A549 (cell line): ENCODE measurements at regions of chr10 and their contacts with region 1.

Region 1: DNA sequence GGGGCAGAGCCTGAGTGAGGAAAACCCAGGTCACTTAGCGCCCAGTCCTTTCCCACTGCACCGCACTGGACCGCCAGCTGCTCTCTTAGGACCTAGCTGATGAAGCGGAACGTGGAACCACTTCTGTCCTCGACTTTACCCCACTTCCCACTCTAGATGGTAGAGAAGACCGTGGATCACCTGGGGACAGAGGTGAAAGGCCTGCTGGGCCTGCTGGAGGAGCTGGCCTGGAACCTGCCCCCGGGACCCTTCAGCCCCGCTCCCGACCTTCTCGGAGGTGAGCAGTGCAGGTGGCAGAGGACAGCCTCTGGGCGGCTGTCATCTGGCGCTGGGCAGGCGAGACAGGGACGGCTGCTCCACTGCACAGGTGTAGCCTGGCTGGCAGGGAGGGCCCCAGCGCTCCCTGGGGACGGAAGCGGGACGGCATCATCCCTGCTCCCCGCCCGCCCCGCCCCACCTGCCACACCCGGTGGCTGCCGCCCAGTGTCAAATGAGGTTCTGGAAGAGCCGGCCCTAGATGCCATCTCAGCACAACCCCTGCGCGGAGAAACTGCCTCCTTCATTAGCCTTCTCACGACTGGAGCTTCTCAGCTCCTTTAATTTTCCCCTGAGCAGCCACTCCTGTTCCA is 11.7 kb downstream of the PLAC9 start:
- DNase-seq: peak in 1 of 2 experiments; percentile 37
- ATAC-seq: peak; percentile 70 to 78
- H3K4me3 ChIP-seq: peak overlapping the region; percentile 33
- H3K27ac ChIP-seq: peak overlapping the region in 1 of 2 experiments; percentile 67; a peak in 4 of 6 replicates
- H3K4me1 ChIP-seq: peaks cover 3% of the 10 kb centered on the region; the same call in 1 of the 3 replicates
- CTCF ChIP-seq: no peak
- EP300 ChIP-seq: no peak
- POLR2A ChIP-seq: no peak
- RAD21 ChIP-seq: peak in 1 of 2 experiments; percentile 33; a peak in 2 of 5 replicates

Region 2: DNA sequence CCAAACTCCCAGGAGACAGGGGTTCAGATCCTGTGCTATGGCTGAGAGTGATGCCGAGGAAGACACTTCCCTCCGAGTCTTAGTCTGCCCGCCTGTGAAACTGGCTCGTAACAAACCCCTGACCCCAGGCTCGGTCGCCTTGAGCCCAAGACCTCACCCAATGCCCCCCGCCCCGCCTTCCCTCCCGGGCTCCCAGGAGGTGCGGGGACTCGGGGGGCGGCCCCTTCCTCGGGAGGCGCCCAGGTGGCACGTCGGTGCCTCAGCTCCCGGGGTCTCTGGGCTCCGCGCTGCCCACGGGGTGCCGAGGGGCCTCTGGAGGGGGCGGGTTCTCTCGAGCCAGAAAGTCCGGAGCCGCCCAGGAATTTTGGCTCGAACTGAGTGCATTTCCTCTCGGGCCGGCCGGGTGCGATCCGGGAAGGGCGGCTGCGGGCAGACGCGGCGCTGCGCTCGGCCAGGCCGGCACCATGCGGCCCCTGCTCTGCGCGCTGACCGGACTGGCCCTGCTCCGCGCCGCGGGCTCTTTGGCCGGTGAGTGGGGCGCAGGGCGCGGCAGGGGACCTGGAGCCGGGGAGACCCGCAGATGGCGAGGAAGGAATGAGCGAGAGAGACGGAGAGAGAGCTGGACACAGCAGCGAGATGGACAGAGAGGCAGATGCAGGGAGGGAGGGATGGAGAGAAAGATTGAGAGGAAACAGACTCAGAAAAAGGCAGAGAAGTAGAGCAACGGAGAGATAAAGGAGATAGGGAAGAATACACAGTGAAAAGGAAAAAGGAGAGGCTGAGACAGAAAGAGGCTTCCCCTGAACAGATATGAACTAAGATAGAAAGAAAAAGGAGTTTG is 11.7 kb before region 1 on chr10 and contains the start of gene PLAC9:
- CTCF ChIA-PET with region 1: interaction called, 27 read pairs
- POLR2A ChIA-PET with region 1: no interaction called
- DNase-seq: peak in 1 of 2 experiments; percentile 18
- ATAC-seq: peak; percentile 78 to 90
- H3K4me3 ChIP-seq: peak within 1 kb of the TSS; percentile 50
- H3K27ac ChIP-seq: peak within 1 kb of the TSS; percentile 12 to 67; a peak in 5 of 6 replicates
- H3K4me1 ChIP-seq: 0 out of 3 replicates have a peak, but pooled peaks cover 9% of the 10 kb centered on the region
- CTCF ChIP-seq: no peak
- EP300 ChIP-seq: no peak
- POLR2A ChIP-seq: no peak
- RAD21 ChIP-seq: no peak
- polyA plus RNA-seq, gene PLAC9: not detected in 2 replicates

Region 3: GRCh38 chr10:80168679-80169380 is 24.6 kb after region 1 on chr10:
- CTCF ChIA-PET with region 1: interaction called, 11 read pairs
- POLR2A ChIA-PET with region 1: no interaction called
- DNase-seq: peak in 1 of 2 experiments; percentile 51
- ATAC-seq: peak; percentile 49 to 80; a peak in 5 of 6 replicates
- H3K4me3 ChIP-seq: no peak overlapping the region
- H3K27ac ChIP-seq: no peak overlapping the region
- H3K4me1 ChIP-seq: peaks cover 15% of the 10 kb centered on the region
- CTCF ChIP-seq: peak; percentile 47
- EP300 ChIP-seq: no peak
- POLR2A ChIP-seq: no peak
- RAD21 ChIP-seq: peak; percentile 44 to 52; a peak in 4 of 5 replicates

Region 4: GRCh38 chr10:80205478-80206276 is 61.5 kb after region 1 on chr10 and contains the start of gene ANXA11:
- CTCF ChIA-PET with region 1: interaction called, 41 read pairs
- POLR2A ChIA-PET with region 1: interaction called, 15 read pairs
- DNase-seq: peak; percentile 78 to 82
- ATAC-seq: peak; percentile 62 to 73
- H3K4me3 ChIP-seq: peak within 1 kb of the TSS; percentile 95
- H3K27ac ChIP-seq: peak within 1 kb of the TSS; percentile 97
- H3K4me1 ChIP-seq: peaks cover 62% of the 10 kb centered on the region
- CTCF ChIP-seq: no peak
- EP300 ChIP-seq: no peak; a peak in 1 of 5 replicates
- POLR2A ChIP-seq: peak; percentile 87
- RAD21 ChIP-seq: no peak
- polyA plus RNA-seq, gene ANXA11: 92.6 and 123 TPM in 2 replicates

Region 5: DNA sequence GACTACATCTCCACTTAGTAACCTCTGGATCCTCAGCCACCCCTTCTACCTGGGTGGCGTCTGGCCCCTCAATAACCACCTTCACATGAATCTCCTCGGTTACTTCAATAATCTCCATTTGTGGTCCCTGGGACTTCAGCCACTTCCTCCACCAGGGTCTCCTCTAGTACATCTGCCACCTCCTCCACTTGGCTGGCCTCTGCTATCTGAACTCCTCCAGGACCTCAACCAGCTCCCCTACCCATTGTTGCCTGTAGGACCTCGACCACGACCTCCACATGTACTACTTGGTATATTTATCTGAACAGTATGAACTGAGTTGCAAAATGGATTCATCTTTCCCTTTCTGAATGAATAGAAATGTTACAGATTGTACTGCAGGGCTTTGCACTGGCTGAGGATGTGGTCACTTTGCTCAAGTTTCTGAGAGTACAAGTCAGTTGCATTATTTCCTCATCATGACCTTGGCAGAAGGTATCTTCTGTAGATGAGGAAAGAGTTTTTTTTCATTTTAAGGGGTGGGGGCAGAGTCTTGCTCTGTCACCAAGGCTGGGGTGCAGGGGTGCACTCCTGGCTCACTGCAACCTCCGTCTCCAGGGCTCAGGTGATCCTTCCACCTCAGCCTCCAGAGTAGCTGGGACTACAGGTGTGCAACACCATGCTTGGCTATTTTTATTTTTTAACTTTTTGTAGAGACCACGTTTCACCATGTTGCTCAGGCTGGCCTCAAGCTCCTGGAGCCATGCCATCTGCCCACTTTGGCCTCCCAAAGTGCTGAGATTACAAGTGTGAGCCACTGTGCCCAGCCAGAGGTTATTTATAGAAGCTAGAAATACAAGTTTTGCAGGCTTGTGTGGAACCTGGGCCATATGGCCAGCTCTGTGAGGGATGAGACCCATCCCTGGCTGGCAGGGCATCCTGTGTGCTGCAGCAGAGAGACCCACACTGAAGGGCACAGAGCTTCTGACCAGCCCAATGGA is 109.4 kb after region 1 on chr10:
- CTCF ChIA-PET with region 1: interaction called, 13 read pairs
- POLR2A ChIA-PET with region 1: no interaction called
- DNase-seq: no peak
- ATAC-seq: no peak
- H3K4me3 ChIP-seq: no peak overlapping the region
- H3K27ac ChIP-seq: no peak overlapping the region
- H3K4me1 ChIP-seq: no peaks in the 10 kb centered on the region
- CTCF ChIP-seq: no peak
- EP300 ChIP-seq: no peak
- POLR2A ChIP-seq: no peak
- RAD21 ChIP-seq: no peak

Region 6: GRCh38 chr10:80632742-80633141 is 488.6 kb after region 1 on chr10:
- CTCF ChIA-PET with region 1: no interaction called
- POLR2A ChIA-PET with region 1: no interaction called
- DNase-seq: no peak
- ATAC-seq: no peak
- H3K4me3 ChIP-seq: no peak overlapping the region
- H3K27ac ChIP-seq: no peak overlapping the region
- H3K4me1 ChIP-seq: no peaks in the 10 kb centered on the region
- CTCF ChIP-seq: no peak
- EP300 ChIP-seq: no peak
- POLR2A ChIP-seq: no peak
- RAD21 ChIP-seq: no peak